IMR-90 (cell line): ENCODE measurements at regions of chr15 and their contacts with region 1.

Region 1: DNA sequence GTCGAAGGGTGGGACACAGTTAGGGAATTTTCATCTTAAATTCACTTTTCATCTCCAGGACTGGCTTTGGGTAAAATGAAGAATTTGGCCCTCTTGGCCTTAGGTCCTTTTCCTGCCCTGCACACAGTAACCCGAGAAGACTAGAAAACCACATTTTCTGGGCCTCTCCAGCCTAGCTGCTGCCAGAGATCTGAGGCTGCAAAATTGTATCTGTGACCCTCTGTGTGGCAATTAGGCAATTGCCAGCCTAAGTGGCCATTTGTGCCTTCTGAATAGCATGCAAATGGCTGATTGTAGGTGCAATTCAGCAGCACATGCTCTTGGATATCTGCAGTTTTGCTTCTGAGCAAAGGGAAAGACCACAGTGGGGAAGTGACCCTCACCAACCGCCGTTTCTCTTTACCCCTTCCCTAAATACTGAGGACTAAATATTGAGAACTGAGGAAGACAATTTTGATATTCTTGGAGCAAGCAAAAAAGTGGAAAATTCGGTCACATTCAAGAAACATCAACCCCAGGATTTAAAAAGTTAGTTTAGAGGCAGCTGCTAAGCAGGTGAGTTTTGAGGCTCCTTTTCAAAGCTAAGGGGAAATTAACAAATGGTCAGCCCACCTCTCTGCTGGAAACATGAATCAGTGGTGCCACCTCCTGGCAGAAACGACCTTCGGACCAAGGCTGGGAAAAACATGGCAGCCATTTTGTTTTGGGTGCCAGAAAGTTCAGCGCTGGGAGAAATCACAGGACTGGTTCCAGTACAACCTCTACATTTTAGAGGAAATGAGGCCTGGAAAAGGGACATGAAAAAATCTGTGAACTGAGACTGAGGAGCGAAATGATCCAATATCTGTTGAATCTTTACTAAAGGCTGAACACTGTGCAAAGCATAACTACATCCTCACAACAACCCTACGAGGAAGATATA is 56.6 kb upstream of the PRTG start:
- DNase-seq: peak; percentile 52
- ATAC-seq: peak; percentile 85
- H3K4me3 ChIP-seq: no peak overlapping the region
- H3K27ac ChIP-seq: no peak overlapping the region
- H3K4me1 ChIP-seq: peaks cover 2% of the 10 kb centered on the region; the same call in 1 of the 2 replicates
- H3K27me3 ChIP-seq: peaks cover 5% of the 10 kb centered on the region
- CTCF ChIP-seq: peak; percentile 77
- POLR2A ChIP-seq: no peak
- RAD21 ChIP-seq: peak; percentile 80

Region 2: GRCh38 chr15:55518641-55519040 is 280.9 kb before region 1 on chr15:
- CTCF ChIA-PET with region 1: no interaction called
- POLR2A ChIA-PET with region 1: no interaction called
- dilution Hi-C with region 1: no loop called
- in situ Hi-C with region 1: no loop called
- intact Hi-C with region 1: loop called (anchors 10 kb)
- DNase-seq: no peak
- ATAC-seq: no peak
- H3K4me3 ChIP-seq: no peak overlapping the region
- H3K27ac ChIP-seq: no peak overlapping the region
- H3K4me1 ChIP-seq: no peaks in the 10 kb centered on the region
- H3K27me3 ChIP-seq: peaks cover 5% of the 10 kb centered on the region; the same call in 1 of the 2 replicates
- CTCF ChIP-seq: peak; percentile 14; the same call in 1 of the 2 replicates
- POLR2A ChIP-seq: no peak
- RAD21 ChIP-seq: no peak

Region 3: DNA sequence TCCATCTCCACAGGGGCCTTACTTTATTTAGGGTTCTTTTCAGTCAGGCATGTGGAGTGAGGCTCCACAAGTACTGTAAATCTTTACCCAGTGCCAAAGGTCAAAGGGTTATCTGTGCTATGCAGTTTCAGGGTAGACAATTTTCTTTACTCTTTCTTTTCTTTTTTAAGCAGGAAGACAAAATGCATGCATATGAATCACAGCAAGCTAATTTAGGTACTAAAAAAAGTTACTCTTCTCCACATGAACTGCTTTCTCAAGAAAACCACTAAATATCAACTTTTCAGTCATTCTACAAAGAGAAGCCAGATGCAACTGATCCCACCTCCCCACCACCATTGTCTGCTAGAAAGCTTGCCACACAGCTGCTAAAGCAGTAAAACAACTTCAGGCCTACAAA is 138.1 kb before region 1 on chr15:
- CTCF ChIA-PET with region 1: interaction called, 3 read pairs
- POLR2A ChIA-PET with region 1: no interaction called
- dilution Hi-C with region 1: no loop called
- in situ Hi-C with region 1: loop called (anchors 25 kb)
- intact Hi-C with region 1: no loop called
- DNase-seq: peak; percentile 33
- ATAC-seq: peak; percentile 44; the same call in 1 of the 2 replicates
- H3K4me3 ChIP-seq: no peak overlapping the region
- H3K27ac ChIP-seq: no peak overlapping the region
- H3K4me1 ChIP-seq: peaks cover 2% of the 10 kb centered on the region
- H3K27me3 ChIP-seq: no peaks in the 10 kb centered on the region
- CTCF ChIP-seq: no peak
- POLR2A ChIP-seq: no peak
- RAD21 ChIP-seq: no peak

Region 4: DNA sequence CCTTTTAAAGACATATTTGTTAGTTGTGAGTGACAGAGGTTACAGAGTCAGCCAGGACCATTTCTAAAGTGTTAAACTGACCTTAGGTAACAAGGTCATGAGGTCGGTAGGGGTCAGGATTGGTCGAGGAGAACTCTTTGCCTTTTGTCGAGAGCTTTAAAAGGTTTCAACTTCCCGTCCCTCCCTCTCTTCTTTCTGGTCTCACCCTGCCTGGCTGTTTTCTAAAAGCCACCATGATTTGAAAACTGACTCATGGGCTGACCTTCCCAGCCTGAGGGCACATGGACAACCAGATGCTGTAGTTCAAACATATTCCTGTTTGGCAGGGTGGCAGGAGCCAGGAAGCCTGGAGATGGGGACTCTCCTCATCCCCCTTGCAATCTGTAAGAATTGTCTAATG is 30.8 kb before region 1 on chr15:
- CTCF ChIA-PET with region 1: no interaction called
- POLR2A ChIA-PET with region 1: no interaction called
- dilution Hi-C with region 1: no loop called
- in situ Hi-C with region 1: no loop called
- intact Hi-C with region 1: no loop called
- DNase-seq: no peak
- ATAC-seq: no peak
- H3K4me3 ChIP-seq: no peak overlapping the region
- H3K27ac ChIP-seq: no peak overlapping the region
- H3K4me1 ChIP-seq: no peaks in the 10 kb centered on the region
- H3K27me3 ChIP-seq: peaks cover 7% of the 10 kb centered on the region
- CTCF ChIP-seq: no peak
- POLR2A ChIP-seq: no peak
- RAD21 ChIP-seq: no peak